ENCODE measurements at regions of chr14 and their contacts with region 1.

Region 1: DNA sequence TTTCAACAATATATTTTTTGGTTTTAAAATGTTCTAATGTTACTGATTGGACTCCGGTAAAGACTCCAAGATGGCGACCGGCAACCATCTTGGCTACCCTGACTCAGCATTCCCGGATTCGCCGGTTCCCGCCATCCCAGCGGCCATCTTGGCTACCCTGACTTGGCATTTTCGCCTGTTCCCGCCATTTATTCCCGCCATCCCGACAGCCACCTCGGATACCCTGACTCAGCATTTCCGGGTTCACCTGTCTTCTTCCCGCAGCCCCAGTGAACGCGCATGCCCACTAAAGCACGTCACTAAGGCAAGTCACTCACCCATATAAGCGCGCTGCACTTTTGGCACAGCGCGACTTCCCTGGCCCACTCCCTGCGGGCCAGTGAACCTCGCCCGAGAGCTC is 9.0 kb upstream of the LRFN5 start:
- DNase-seq: no peak
- ATAC-seq: no peak
- H3K4me3 ChIP-seq: no peak overlapping the region
- H3K27ac ChIP-seq: no peak overlapping the region
- H3K4me1 ChIP-seq: no peaks in the 10 kb centered on the region
- H3K27me3 ChIP-seq: no peaks in the 10 kb centered on the region
- CTCF ChIP-seq: no peak
- POLR2A ChIP-seq: no peak
- RAD21 ChIP-seq: no peak

Region 2: GRCh38 chr14:40417777-40418401 is 1179.8 kb before region 1 on chr14:
- CTCF ChIA-PET with region 1: interaction called, 4 read pairs
- POLR2A ChIA-PET with region 1: no interaction called
- RAD21 ChIA-PET with region 1: no interaction called
- intact Hi-C with region 1: loop called (anchors 10 kb)
- DNase-seq: peak; percentile 29
- ATAC-seq: peak; percentile 91
- H3K4me3 ChIP-seq: peak overlapping the region; percentile 15 to 23; a peak in 2 of 4 replicates
- H3K27ac ChIP-seq: no peak overlapping the region
- H3K4me1 ChIP-seq: no peaks in the 10 kb centered on the region
- H3K27me3 ChIP-seq: no peaks in the 10 kb centered on the region
- CTCF ChIP-seq: peak; percentile 15 to 89 (median 81); a peak in 5 of 6 replicates
- POLR2A ChIP-seq: no peak
- RAD21 ChIP-seq: peak; percentile 61

Region 3: DNA sequence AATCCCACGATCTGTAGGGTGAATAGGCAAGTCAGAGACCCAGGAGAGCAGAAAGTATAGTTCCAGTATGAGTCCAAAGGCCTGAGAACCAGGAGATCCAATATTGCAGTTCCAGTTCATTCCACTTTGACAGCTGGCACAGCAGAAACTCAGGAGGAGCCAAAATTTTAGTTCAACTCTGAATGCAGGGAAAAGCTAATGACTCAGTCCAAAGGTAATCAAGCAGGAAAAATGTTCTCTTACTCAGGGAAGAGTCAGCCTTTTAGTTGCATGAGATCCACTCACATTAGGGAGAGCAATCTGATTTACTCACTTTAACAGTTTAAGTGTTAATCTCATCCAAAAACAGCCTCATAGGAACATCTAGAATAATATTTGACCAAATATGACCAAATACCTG is 121.1 kb before region 1 on chr14:
- CTCF ChIA-PET with region 1: no interaction called
- POLR2A ChIA-PET with region 1: no interaction called
- RAD21 ChIA-PET with region 1: no interaction called
- intact Hi-C with region 1: no loop called
- DNase-seq: no peak
- ATAC-seq: no peak
- H3K4me3 ChIP-seq: no peak overlapping the region
- H3K27ac ChIP-seq: no peak overlapping the region
- H3K4me1 ChIP-seq: no peaks in the 10 kb centered on the region
- H3K27me3 ChIP-seq: no peaks in the 10 kb centered on the region
- CTCF ChIP-seq: no peak
- POLR2A ChIP-seq: no peak
- RAD21 ChIP-seq: no peak

Region 4: DNA sequence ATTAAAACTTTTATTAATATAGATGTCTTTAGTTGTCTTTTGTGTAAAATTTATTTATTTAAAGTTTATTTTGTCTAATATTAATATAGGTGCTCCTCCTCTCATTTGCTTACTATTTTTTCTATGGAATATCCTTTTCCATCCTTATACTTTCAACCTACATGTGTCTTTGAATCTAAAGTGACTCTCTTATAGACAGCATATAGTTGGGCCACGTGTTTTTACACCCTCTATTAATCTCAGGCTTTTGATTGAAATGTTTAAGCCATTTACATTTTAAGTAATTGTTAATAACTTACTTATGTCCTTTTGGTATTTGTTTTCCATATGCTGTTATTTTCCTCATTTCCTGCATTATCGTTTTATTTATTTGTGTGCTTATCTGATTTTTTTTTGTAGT is 65.4 kb before region 1 on chr14:
- CTCF ChIA-PET with region 1: no interaction called
- POLR2A ChIA-PET with region 1: no interaction called
- RAD21 ChIA-PET with region 1: no interaction called
- intact Hi-C with region 1: no loop called
- DNase-seq: no peak
- ATAC-seq: no peak
- H3K4me3 ChIP-seq: no peak overlapping the region
- H3K27ac ChIP-seq: no peak overlapping the region
- H3K4me1 ChIP-seq: no peaks in the 10 kb centered on the region
- H3K27me3 ChIP-seq: no peaks in the 10 kb centered on the region
- CTCF ChIP-seq: no peak
- POLR2A ChIP-seq: no peak
- RAD21 ChIP-seq: no peak

Region 5: GRCh38 chr14:41549821-41550607 is 47.6 kb before region 1 on chr14:
- CTCF ChIA-PET with region 1: no interaction called
- POLR2A ChIA-PET with region 1: no interaction called
- RAD21 ChIA-PET with region 1: no interaction called
- intact Hi-C with region 1: no loop called
- DNase-seq: no peak
- ATAC-seq: 0 out of 2 replicates have a peak, but pooled peaks have one; percentile 30
- H3K4me3 ChIP-seq: no peak overlapping the region
- H3K27ac ChIP-seq: no peak overlapping the region
- H3K4me1 ChIP-seq: peaks cover 7 to 14% of the 10 kb centered on the region in 2 experiments
- H3K27me3 ChIP-seq: no peaks in the 10 kb centered on the region
- CTCF ChIP-seq: no peak
- POLR2A ChIP-seq: no peak
- RAD21 ChIP-seq: no peak

Region 6: DNA sequence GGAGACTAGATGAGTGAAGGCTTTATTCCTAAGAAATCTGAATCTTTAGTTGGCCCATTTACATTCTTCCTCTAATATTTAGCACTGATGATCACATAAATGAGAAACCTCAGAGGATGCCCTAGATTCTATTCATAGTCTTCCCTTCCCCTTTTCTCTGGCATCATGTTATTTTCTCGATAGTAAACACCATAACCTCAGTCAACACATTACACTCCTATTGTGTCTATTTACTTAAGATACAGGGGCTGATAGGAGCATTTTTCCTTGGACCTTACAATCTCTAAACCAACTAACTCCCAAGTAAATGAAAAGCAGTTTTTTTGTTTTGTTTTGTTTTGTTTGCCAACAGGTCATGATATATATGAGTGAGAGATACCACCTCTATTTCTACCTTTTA is 22.3 kb before region 1 on chr14:
- CTCF ChIA-PET with region 1: no interaction called
- POLR2A ChIA-PET with region 1: no interaction called
- RAD21 ChIA-PET with region 1: no interaction called
- intact Hi-C with region 1: no loop called
- DNase-seq: no peak
- ATAC-seq: no peak
- H3K4me3 ChIP-seq: no peak overlapping the region
- H3K27ac ChIP-seq: no peak overlapping the region
- H3K4me1 ChIP-seq: no peaks in the 10 kb centered on the region
- H3K27me3 ChIP-seq: no peaks in the 10 kb centered on the region
- CTCF ChIP-seq: no peak
- POLR2A ChIP-seq: no peak
- RAD21 ChIP-seq: no peak